ENCODE measurements at regions of chr10 and their contacts with region 1.

Region 1: GRCh38 chr10:26627324-26627723 is 70.2 kb upstream of the PDSS1 start:
- DNase-seq: no peak
- H3K4me3 ChIP-seq: no peak overlapping the region
- CTCF ChIP-seq: no peak
- POLR2A ChIP-seq: no peak

Region 2: DNA sequence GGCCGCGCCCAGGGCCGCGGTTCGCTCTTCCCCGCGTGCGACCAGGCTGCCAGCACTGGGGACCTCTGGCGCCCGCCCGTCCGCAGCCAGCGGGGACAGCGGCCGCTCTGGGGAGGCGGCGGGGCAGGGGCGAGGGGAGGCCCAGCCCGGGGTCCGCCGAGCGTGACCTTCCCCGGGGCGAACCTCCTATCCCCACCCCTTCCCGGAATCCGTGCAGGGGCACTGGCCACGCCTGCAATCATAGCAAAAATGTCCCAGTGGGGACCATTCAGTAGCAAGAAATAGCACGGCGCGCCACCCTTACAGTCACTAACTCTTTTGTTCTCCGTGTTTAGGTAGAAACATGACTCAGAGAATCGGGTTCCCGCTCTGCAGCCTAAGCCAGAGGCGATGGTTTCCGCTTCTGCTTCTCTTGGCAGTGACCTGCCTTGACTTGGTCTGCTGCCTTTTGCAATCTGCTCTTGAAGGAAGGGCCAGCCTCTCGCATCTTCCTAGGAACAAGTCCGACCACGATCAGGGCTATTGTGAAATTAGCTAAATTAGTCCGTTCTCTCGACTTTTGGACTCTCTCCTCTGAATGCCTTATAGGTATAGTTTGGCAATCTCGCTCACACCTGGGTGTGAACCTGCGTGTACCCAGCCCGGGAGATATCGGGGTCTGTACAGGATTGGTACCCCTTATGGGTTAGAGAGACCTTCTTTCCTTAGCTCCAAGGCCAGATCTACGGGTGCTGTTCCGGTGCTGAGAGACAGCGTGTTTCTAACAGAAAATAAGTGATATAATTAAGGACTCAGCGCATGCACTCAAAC is 692.6 kb after region 1 on chr10:
- intact Hi-C with region 1: loop called (anchors 5 kb)
- DNase-seq: peak; percentile 66 to 92
- H3K4me3 ChIP-seq: no peak overlapping the region
- CTCF ChIP-seq: no peak
- POLR2A ChIP-seq: no peak

Measured in lower leg skin (tissue), 4 donors.